Mammary epithelial cell (primary cell): ENCODE measurements at regions of chr2 and their contacts with region 1.

Region 1: GRCh38 chr2:196399722-196400691 is 228.6 kb upstream of the STK17B start:
- DNase-seq: peak; percentile 68
- H3K4me3 ChIP-seq: no peak overlapping the region
- H3K27ac ChIP-seq: peak overlapping the region; percentile 34
- H3K4me1 ChIP-seq: peaks cover 11% of the 10 kb centered on the region
- H3K27me3 ChIP-seq: no peaks in the 10 kb centered on the region
- CTCF ChIP-seq: no peak

Region 2: GRCh38 chr2:196365923-196366322 is 34.1 kb before region 1 on chr2:
- CTCF ChIA-PET with region 1: no interaction called
- dilution Hi-C with region 1: no loop called
- in situ Hi-C with region 1: no loop called
- intact Hi-C with region 1: loop called (anchors 5 kb)
- DNase-seq: no peak
- H3K4me3 ChIP-seq: no peak overlapping the region
- H3K27ac ChIP-seq: no peak overlapping the region
- H3K4me1 ChIP-seq: no peaks in the 10 kb centered on the region
- H3K27me3 ChIP-seq: no peaks in the 10 kb centered on the region
- CTCF ChIP-seq: no peak